PC-9 (cell line): ENCODE measurements at regions of chr22 and their contacts with region 1.

Region 1: DNA sequence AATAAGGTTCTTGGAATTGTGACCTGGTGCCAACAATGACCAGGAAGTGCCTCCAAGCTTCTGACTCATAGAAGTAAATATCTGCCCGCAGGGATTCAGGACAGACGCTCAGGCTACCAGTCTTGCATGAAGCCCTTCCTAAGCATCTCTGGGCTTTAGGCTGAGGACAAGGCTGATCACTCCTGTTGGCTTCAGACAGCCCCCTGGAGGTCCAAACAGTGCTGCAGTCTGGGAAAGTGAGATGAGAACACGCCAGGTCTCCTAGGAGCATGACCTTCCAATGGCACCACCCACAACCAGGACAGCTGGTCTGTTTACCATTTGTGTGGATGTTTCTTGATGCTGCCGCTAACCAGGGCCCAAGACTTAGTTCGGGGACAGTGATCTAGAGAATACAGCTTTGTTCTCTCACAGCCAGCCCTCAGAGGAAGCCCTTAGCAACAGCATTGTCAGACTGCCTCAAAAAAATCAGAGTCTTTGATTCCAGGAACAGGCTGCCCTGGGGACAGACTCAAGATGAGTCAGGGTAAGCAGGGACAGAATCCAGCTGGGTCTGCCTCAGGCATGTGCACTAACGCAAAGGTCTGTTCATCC is 111.2 kb downstream of the ZNF280B start:
- DNase-seq: peak; percentile 49 to 72
- H3K4me3 ChIP-seq: no peak overlapping the region
- H3K27ac ChIP-seq: no peak overlapping the region
- H3K4me1 ChIP-seq: peaks cover 9% of the 10 kb centered on the region
- H3K27me3 ChIP-seq: 0 out of 2 replicates have a peak, but pooled peaks cover 6% of the 10 kb centered on the region
- CTCF ChIP-seq: no peak

Region 2: DNA sequence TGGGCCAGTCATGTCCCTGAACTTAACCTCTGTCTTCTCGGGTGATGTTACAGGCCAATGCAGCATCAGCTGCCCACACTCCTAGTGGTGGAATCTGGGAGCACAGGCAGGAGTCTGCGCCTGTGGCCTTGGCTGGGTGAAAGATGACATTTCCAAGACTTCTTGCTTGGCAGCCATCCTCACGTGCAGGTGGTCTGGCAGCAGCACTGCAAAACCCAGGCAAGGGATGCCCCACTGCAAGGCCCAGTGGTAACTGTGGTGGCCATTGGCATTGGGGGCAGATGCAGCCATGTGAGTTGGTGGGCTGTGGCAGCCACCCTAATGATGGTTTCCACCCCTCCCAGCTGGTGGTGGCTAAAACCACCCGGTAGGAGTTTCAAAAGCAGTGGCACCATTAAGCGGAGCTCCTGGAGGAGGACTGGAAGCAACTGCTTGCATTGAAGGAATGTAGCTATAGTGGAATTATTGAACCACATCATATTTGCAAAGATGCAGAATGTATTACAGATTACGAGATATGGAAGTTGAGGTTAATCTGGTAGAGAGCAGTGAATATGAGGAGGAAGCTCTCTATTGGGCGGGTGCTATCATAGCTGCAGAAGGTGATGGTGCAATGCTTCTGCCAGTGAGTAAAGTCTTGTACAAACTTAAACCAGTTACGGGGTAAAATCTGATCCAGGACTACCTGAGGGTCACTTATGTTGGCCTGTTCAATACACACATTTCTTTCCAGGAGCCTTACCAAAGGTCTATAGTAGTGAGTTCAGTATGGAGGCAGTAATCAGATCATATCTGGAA is 294.1 kb before region 1 on chr22:
- CTCF ChIA-PET with region 1: no interaction called
- POLR2A ChIA-PET with region 1: no interaction called
- intact Hi-C with region 1: no loop called
- DNase-seq: no peak
- H3K4me3 ChIP-seq: no peak overlapping the region
- H3K27ac ChIP-seq: no peak overlapping the region
- H3K4me1 ChIP-seq: no peaks in the 10 kb centered on the region
- H3K27me3 ChIP-seq: peaks cover 40% of the 10 kb centered on the region
- CTCF ChIP-seq: peak; percentile 45

Region 3: DNA sequence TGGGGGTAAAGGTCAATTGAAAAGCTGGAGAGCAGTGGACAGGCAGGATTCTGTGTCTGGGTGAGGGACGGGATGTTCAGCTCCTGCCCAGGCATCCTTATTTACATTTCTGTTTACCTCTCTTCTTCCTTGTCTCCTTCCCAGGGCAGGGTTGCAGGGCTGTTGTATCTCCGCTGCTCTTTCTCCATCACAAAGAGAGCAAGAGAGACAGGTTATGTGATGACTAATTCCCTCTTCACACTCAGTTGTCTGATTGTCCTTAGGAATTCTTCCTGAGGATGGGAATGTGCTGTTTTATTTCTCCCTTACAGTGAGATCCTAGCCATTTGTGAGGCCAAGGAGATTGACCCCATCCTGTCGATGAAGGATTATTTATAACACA is 47.9 kb before region 1 on chr22:
- CTCF ChIA-PET with region 1: interaction called, 3 read pairs
- POLR2A ChIA-PET with region 1: no interaction called
- intact Hi-C with region 1: loop called (anchors 1 kb)
- DNase-seq: no peak
- H3K4me3 ChIP-seq: no peak overlapping the region
- H3K27ac ChIP-seq: no peak overlapping the region
- H3K4me1 ChIP-seq: no peaks in the 10 kb centered on the region
- H3K27me3 ChIP-seq: peaks cover 43% of the 10 kb centered on the region
- CTCF ChIP-seq: no peak